ENCODE measurements at regions of chr11 and their contacts with region 1.

Region 1: DNA sequence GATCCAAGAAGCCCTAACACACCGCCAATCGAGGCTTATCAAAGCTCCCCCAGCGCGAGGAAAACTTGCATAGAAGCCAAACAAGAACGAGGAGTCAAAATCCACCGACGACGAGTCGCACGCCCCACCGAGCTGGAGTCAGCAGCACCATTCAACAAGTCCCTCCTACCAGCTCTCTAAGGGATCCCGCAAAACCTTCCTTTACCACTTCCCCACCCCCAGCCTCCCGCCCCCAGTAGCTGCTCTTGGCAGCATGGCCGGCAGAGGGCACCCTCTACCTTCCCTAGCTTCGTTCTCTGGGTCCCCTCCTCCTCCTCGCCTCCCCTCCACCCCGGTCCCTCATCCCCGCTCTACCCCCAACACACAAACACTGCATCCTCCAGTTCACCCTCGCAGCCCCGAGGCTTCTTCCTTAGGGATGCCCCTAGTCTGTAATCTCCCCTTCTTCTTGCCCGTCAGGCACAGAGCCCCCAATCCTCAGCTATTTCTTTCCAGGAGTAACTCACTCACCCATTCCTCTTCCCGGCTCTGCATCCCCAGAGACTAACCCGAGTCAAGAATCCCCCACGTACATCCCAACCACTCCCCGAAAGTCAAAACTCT is 1.3 kb downstream of the BDNF start:
- DNase-seq: peak; percentile 91
- H3K4me3 ChIP-seq: peak overlapping the region; percentile 75 to 92 (median 88)
- H3K27ac ChIP-seq: peak overlapping the region; percentile 60
- H3K4me1 ChIP-seq: peaks cover 19% of the 10 kb centered on the region
- H3K27me3 ChIP-seq: peaks cover 0 to 10% of the 10 kb centered on the region in 2 experiments
- CTCF ChIP-seq: peak; percentile 44 to 92
- POLR2A ChIP-seq: peak; percentile 65

Region 2: DNA sequence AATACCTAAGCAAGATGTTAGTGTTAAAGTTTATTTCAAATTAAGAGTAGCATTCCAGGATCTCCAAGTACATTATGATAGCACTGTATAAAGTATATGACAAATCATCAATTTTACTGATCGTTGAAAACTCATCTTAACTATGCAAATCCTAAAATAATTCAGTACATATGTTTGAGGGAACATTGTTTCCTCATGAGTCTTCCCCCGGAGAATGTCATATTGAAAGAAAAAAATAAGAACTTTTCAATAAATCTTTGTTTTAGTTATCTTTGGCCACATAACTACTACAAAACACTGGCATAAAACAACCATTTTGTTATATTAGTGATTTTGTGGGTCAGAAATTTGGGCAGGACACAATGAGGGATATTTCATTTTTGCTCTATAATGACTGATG is 544.6 kb after region 1 on chr11:
- CTCF ChIA-PET with region 1: no interaction called
- POLR2A ChIA-PET with region 1: no interaction called
- dilution Hi-C with region 1: no loop called
- intact Hi-C with region 1: loop called (anchors 10 kb)
- DNase-seq: no peak
- H3K4me3 ChIP-seq: no peak overlapping the region
- H3K27ac ChIP-seq: no peak overlapping the region
- H3K4me1 ChIP-seq: no peaks in the 10 kb centered on the region
- H3K27me3 ChIP-seq: no peaks in the 10 kb centered on the region
- CTCF ChIP-seq: no peak
- POLR2A ChIP-seq: no peak

Region 3: DNA sequence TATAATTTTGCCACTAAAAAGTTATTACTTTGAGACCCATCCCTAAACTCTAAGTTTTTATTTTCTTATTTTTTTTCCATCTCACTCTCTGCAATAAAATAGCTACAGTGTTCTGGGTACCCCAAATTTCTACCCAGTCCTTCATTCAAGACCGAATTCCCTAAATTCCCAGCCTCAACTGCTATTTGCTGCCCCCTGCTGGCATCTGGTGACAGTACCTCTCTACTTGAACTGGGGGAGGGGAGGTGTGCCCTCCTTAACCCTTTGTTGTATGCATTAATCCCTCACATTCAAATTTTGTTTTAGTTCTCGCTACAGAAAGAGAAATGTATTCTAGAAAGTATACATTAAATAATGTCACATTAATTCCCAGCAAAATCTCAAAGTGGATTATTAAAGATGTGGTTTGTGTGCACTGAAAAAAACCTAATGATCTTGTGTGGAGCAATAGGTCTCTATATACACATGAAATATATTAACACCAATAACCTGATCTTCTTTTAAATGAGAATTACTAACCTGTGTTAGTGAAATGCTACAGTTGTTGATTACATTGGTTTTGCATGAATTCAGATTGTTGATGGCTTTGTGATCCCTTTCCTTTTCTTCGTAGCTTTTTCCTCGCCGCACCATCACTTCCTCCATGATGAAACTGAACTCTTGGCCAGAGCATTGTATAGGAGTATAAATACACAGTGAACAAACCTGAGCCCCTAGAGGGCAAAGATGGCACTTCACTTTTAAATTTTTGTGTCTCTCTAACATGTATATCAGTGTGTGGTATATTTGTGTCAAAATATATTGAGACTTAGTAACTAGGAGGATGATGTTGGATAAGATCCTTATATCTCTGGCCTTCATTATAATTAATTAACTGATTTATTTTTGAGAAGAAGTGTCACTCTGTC is 999.2 kb after region 1 on chr11:
- CTCF ChIA-PET with region 1: interaction called, 33 read pairs
- POLR2A ChIA-PET with region 1: no interaction called
- dilution Hi-C with region 1: no loop called
- intact Hi-C with region 1: loop called (anchors 1 kb)
- DNase-seq: peak; percentile 60
- H3K4me3 ChIP-seq: no peak overlapping the region
- H3K27ac ChIP-seq: no peak overlapping the region
- H3K4me1 ChIP-seq: peaks cover 21% of the 10 kb centered on the region
- H3K27me3 ChIP-seq: no peaks in the 10 kb centered on the region
- CTCF ChIP-seq: peak; percentile 73 to 80
- POLR2A ChIP-seq: no peak

Region 4: GRCh38 chr11:28878025-28878424 is 1179.1 kb after region 1 on chr11:
- CTCF ChIA-PET with region 1: no interaction called
- POLR2A ChIA-PET with region 1: no interaction called
- dilution Hi-C with region 1: no loop called
- intact Hi-C with region 1: loop called (anchors 10 kb)
- DNase-seq: no peak
- H3K4me3 ChIP-seq: no peak overlapping the region
- H3K27ac ChIP-seq: no peak overlapping the region
- H3K4me1 ChIP-seq: peaks cover 5% of the 10 kb centered on the region
- H3K27me3 ChIP-seq: no peaks in the 10 kb centered on the region
- CTCF ChIP-seq: no peak
- POLR2A ChIP-seq: no peak

Region 5: DNA sequence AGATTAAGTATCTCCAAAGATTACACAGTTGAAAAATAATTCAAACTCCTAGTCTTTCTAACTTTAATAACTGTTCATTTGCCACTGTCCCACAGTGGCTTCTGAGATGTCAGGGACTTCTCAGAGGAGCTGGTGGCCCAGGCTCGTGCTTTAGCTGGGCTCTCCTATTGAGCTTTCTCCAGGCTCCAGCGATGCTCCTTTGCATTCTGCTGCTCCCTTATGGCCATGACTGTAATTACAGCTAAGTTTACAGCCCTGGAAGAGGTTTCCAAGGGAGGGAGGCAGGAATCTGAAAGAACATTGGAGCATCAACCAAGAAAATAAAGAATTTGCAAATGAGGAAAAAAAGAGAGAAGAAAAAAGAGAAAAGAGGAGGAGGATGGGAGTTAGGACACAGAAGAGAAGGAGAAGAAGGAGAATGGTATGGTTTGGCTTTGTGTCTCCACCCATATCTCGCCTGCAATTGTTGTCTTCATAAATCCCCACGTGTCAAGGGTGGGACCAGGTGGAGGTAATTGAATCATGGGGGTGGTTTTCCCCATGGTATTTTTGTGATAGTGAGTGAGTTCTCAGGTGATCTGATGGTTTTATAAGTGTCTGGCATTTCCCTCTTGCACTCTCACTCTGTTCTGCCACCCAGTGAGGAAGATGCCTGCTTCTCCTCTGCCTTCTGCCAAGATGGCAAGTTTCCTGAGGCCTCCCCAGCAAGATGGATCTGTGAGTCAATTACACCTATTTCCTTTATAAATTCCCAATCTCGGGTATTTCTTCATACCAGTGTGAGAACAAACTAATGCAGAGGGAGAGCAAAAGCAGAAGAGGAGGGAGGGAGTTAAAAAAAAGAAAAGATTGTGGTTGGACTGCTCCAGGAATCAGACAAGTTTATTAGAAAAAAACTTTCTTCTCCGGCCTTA is 1460.8 kb after region 1 on chr11:
- CTCF ChIA-PET with region 1: interaction called, 76 read pairs
- POLR2A ChIA-PET with region 1: no interaction called
- dilution Hi-C with region 1: no loop called
- intact Hi-C with region 1: loop called (anchors 1 kb)
- DNase-seq: peak; percentile 82
- H3K4me3 ChIP-seq: no peak overlapping the region
- H3K27ac ChIP-seq: peak overlapping the region; percentile 12
- H3K4me1 ChIP-seq: peaks cover 9% of the 10 kb centered on the region
- H3K27me3 ChIP-seq: no peaks in the 10 kb centered on the region
- CTCF ChIP-seq: peak; percentile 67 to 71
- POLR2A ChIP-seq: no peak

Region 6: DNA sequence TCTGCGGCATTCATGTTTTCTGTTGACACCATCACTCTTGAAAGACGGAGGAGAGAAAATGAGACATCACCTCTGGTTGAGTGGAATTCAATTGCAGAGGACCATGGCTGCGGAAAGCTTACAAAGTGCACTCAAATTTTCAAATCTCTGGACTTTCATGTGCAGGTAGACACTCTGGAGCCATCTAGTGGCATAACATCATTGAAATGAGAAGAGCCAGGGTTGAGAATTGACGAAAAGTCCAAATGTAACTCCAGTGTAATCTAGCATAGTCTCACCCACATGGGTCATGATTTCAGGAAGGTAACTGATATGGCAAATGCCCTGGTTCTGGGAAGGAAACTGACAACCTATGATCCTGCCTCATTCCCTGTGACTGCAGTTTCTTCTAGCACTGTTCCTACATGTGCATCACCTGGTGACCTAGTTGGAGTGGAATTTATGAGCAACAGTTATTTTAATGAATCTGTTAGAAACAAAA is 1630.0 kb after region 1 on chr11:
- CTCF ChIA-PET with region 1: interaction called, 133 read pairs
- POLR2A ChIA-PET with region 1: no interaction called
- dilution Hi-C with region 1: no loop called
- intact Hi-C with region 1: loop called (anchors 1 kb)
- DNase-seq: peak; percentile 75
- H3K4me3 ChIP-seq: no peak overlapping the region
- H3K27ac ChIP-seq: no peak overlapping the region
- H3K4me1 ChIP-seq: peaks cover 7% of the 10 kb centered on the region
- H3K27me3 ChIP-seq: no peaks in the 10 kb centered on the region
- CTCF ChIP-seq: peak; percentile 63 to 66
- POLR2A ChIP-seq: no peak